Sciatic nerve (tissue), 2 donors: ENCODE measurements at regions of chr20 and their contacts with region 1.

Region 1: DNA sequence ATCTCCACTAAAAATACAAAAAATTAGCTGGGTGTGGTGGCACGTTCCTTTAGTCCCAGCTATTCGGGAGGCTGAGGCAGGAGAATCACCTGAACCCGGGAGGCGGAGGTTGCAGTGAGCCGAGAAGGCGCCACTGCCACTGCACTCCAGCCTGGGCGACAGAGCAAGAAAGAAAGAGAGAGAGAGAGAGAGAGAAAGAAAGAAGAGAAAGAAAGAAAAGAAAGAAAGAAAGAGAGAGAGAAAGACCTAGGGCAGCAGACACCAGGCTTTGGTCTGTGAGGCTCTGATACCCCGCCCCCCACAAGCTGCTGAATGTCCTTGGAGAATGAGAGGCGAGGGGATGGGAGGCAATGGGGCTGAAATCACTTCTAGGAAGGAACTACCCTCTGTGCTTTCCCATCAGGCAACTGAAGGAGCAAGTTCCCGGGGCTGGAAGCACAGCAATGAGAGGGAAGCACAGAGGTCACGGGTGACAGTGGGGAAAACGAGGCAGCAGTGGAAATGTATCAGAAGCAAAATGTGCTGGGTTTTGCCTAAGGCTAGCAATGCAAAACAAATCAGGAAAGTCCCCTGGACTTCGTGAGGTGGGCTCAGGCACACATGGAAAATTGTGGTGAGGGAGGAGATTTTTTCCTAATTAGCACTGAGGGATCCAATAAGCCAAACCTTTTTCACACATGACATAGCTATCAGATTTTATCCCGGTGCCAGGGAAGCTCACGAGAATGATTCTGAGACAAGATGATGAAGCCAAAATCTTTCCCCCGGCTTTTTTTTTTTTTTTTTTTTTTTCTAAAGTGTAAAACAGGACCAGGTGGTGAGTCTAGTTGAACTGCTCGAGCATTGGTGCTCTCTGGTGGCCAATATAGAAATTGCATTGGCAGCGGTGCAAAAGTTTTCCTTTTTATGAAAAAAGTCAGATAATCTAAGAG is 16.9 kb upstream of the ARFGEF2 start:
- DNase-seq: peak; percentile 79
- ATAC-seq: peak; percentile 82

Region 2: DNA sequence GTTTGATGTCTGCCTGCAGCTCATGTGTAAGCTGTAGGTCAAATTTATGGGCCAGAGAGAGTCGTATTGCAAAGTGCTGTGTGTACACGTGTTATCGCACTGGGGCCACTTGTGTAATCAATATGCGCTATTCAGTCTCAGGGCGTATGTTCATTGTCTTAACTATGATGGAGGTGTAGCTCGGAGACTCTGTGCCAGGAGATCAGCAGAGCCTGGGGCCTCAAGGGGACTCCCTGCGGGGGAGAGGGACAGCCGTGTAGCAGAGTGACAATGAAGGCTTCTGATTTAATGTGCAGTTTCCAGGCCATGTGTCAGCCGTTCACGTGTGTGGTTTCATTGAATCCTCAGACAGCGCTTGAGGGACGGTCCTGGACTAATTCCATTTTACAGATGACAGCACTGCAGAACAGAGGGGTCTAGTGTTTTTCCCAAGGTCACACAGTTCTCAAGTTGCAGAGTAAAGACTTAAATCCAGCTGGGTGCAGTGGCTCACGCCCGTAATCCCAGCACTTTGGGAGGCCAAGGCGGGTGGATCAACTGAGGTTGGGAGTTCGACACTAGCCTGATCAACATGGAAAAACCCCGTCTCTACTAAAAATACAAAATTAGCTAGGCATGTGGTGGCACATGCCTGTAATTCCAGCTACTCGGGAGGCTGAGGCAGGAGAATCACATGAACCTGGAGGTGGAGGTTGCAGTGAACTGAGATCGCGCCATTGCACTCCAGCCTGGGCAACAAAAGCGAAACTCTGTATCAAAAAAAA is 319.4 kb before region 1 on chr20:
- intact Hi-C with region 1: no loop called
- DNase-seq: peak; percentile 9
- ATAC-seq: no peak

Region 3: DNA sequence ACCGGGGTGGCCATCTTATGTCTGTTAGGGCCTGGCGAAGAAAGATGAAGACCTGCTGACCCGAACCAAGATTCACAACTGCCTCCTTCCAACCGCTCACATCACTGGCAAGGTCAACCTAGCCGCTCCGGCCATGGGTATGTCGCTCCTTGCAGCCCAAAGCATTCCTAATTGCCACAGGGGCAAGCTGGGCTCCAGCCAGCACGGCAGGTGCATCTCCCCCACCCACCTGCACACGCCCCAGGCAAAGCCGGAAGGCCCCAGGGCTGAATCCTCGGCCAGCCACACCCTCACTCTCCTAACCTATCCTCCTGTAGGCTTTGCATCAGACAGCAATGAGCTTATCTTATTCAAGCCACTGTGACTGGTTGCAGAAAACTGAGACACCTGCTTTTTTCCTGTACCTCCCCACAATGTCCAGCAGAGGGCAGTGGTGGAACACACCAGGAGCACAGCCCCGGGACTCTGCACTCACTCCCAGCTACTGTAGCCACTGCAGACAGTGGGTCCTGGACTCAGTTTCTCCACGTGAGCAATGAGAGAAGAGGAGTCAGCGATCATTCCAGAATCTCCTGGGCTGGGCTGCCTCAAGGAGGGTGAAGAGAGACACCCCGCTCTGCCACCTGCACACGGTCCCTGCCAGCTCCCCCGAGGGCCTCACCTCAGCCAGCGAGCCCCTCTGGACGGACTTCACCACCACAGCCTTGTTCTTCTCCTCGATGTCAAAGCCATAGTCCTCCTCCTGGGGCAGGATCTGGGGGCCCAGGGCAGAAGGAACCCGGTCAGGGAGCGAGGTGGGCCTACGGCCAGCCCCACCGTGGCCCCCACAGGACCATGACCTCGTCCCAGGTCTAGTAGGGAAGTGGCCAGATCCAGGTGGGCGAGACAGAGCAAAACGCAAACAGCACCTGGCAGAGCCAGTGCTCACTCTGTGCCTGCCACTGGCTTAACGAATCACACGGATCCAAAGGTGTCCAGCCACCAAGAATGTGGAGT is 246.9 kb before region 1 on chr20:
- intact Hi-C with region 1: loop called (anchors 5 kb)
- DNase-seq: peak; percentile 75
- ATAC-seq: peak; percentile 88

Region 4: GRCh38 chr20:49340161-49340966 is 435.7 kb after region 1 on chr20:
- intact Hi-C with region 1: no loop called
- DNase-seq: no peak
- ATAC-seq: no peak

Region 5: GRCh38 chr20:49400410-49400809 is 495.8 kb after region 1 on chr20:
- intact Hi-C with region 1: no loop called
- DNase-seq: no peak
- ATAC-seq: peak; percentile 85